ENCODE measurements at regions of chr12 and their contacts with region 1.

Region 1: DNA sequence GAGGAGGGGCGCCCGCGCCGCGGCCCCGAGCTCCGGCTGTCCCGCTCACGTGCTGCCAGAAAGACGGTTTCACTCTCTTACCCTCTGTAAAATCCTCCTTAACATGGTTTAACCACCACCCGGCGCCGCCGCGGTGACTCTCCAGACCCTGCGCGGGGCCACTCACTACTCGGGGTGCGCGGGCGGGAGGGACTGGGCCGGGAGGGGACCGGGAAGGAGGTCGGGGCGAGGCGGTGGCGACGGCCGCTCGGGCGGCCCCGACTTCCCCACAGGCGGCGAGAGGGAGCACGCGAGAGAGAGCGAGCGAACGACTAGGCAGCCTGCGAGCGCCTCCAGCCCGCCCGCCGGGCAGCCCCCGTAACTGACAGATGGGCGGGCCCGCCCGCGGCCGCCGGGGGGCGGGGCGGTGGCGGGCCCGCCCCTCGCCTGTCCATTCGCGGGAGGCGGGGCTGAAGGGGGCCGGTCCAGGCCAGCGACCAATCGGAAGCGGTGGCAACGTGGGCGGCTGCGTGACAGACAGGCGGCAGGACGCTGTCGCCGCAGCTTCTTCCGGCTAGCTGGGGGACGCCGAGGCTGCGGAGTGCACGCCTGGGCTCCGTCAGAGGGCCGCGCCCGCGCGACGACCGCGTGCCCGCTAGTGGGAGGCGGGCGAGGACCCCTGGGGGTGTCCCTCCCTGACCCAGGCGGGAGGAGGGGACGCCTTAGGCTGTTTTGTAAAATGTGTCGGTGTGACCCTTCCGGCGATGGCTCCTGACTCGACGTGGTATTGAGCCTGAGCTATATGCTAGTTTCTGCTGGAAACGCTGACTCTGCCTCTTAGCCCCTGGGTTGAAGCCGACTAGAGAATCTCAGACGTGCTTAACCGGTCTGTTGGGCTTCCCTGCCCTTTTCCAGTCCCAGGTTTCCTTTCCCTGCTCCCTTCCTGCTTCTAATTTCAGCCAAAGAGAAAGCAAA is at the start of gene EEA1:
- DNase-seq: peak; percentile 88 to 97 (median 95)
- ATAC-seq: peak; percentile 84
- H3K4me3 ChIP-seq: peak within 1 kb of the TSS; percentile 71 to 78
- H3K4me3 Mint-ChIP-seq: peak within 1 kb of the TSS; percentile 85
- H3K27ac ChIP-seq: peak within 1 kb of the TSS; percentile 85 to 90
- H3K27ac Mint-ChIP-seq: peak within 1 kb of the TSS; percentile 95
- H3K4me1 ChIP-seq: peaks cover 26% of the 10 kb centered on the region
- H3K4me1 Mint-ChIP-seq: peaks cover 40% of the 10 kb centered on the region
- H3K27me3 ChIP-seq: no peaks in the 10 kb centered on the region
- H3K27me3 Mint-ChIP-seq: no peaks in the 10 kb centered on the region
- CTCF ChIP-seq: no peak
- total RNA-seq, gene EEA1: 4.3 to 6.9 TPM

Region 2: DNA sequence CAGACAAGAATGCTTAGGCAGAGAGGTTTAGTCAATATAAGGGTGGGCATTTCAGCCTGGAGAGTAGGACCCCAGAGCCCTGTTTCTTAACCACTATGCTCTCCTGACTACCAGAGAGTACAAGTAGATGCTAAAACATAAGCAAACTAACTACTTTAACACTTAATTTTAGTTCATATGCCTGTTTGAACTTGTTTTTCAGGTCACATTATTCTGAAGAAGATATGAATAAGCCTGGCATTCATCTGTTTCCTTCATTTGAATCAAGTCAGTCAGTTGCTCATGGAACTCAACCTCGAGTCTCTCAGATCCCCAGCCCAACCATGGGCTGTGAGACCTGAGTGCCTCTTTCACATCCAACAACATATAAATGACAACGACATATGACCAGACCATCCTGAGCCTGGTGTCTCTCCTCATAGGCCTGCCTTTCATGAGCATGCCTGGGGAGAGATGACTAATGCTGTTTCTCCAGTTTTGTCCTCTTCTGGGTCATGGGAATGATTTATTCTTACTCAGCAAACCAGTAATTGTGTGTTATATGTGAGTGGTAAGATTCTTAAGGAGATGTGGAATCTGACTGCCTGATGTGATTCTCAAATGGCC is 532.5 kb before region 1 on chr12:
- CTCF ChIA-PET with region 1: no interaction called
- POLR2A ChIA-PET with region 1: no interaction called
- intact Hi-C with region 1: loop called in 1 of 2 experiments (anchors 10 kb)
- DNase-seq: no peak
- ATAC-seq: no peak
- H3K4me3 ChIP-seq: no peak overlapping the region
- H3K4me3 Mint-ChIP-seq: peak overlapping the region; percentile 4
- H3K27ac ChIP-seq: peak overlapping the region; percentile 2 to 46
- H3K27ac Mint-ChIP-seq: peak overlapping the region; percentile 95
- H3K4me1 ChIP-seq: peaks cover 88% of the 10 kb centered on the region
- H3K4me1 Mint-ChIP-seq: peaks cover 93% of the 10 kb centered on the region
- H3K27me3 ChIP-seq: no peaks in the 10 kb centered on the region
- H3K27me3 Mint-ChIP-seq: no peaks in the 10 kb centered on the region
- CTCF ChIP-seq: no peak

Region 3: DNA sequence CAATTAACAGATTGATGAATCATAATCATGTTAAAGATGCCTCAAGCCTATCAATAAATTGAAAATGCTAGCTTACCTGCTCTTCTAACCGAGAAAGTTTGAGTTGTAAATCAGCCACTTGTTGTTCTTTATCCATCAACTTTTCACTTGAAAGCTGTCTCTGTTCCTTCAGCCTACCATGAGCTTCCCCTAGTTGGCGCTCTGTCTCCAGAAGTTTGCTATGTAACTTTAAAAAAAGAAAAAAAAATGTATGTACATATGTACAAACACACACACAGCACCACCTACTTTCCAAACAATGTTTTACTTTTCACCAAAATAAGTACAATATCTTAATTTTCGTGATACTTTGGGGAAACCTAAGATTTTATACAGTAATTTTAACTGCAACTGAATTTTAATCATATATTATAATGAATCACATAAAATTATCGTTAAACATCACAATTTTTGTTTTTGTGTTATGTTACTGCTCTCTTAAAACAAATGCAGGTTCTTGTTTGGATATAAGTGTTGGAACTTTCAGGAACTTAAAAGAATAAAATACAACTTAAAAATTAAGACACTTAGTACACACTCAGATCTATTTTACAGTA is 101.3 kb before region 1 on chr12:
- CTCF ChIA-PET with region 1: interaction called, 3 read pairs
- POLR2A ChIA-PET with region 1: interaction called, 3 read pairs
- intact Hi-C with region 1: loop called (anchors 1 to 5 kb)
- DNase-seq: peak in 6 of 9 experiments; percentile 9 to 61 (median 36)
- ATAC-seq: no peak
- H3K4me3 ChIP-seq: no peak overlapping the region
- H3K4me3 Mint-ChIP-seq: no peak overlapping the region
- H3K27ac ChIP-seq: no peak overlapping the region
- H3K27ac Mint-ChIP-seq: no peak overlapping the region
- H3K4me1 ChIP-seq: no peaks in the 10 kb centered on the region
- H3K4me1 Mint-ChIP-seq: peaks cover under 1% of the 10 kb centered on the region
- H3K27me3 ChIP-seq: no peaks in the 10 kb centered on the region
- H3K27me3 Mint-ChIP-seq: no peaks in the 10 kb centered on the region
- CTCF ChIP-seq: peak; percentile 64

Region 4: GRCh38 chr12:92890601-92891106 is 38.6 kb before region 1 on chr12:
- CTCF ChIA-PET with region 1: interaction called, 3 read pairs
- POLR2A ChIA-PET with region 1: interaction called, 3 read pairs
- intact Hi-C with region 1: loop called (anchors 5 kb)
- DNase-seq: no peak
- ATAC-seq: no peak
- H3K4me3 ChIP-seq: no peak overlapping the region
- H3K4me3 Mint-ChIP-seq: no peak overlapping the region
- H3K27ac ChIP-seq: no peak overlapping the region
- H3K27ac Mint-ChIP-seq: no peak overlapping the region
- H3K4me1 ChIP-seq: no peaks in the 10 kb centered on the region
- H3K4me1 Mint-ChIP-seq: peaks cover 31% of the 10 kb centered on the region
- H3K27me3 ChIP-seq: no peaks in the 10 kb centered on the region
- H3K27me3 Mint-ChIP-seq: no peaks in the 10 kb centered on the region
- CTCF ChIP-seq: no peak

Region 5: DNA sequence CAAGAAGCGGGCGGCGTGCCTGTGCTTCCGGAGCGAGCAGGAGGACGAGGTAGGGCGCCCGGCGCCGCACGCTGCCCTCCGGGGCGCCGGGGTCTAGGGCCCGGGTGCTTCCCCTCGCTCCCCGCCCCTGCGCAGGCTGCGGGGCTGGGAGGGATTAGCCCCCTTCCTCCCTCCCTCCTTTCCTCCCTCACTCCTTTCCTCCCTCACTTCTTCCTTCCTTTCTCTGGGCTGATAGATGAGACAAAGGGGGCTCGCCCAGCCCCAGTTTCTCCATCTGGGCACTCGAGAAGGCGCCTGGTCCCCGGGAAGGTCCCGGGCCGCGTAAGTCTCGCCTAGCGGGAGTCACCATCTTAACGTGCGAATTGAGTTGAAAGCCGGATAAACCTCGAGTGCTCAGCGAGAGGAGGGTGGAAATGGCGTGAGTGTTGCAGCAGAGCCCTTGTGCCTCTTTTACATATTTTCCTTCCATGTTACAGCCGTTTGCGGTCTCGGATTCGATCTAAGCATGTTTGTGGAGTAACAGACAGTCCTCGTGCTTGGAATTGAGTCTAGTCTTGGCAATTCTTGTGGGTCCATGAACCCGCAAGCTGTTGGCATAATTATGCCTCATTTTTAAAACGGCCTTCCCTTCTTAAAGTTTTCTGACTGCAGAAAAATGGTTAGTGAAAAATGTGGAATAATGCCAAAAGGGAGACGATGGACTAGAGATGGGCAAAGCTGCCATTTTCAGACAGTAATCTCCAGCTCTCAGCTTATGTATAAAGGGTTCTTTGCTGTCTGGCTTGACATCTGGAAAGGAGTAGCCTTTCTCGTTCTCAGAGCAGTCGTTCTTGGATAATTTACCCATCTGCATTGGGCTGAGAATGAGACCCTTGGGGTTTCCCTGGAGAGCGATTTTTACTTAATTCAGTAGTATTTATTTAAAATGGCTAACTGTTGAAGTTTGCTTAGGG is 449.4 kb after region 1 on chr12:
- CTCF ChIA-PET with region 1: interaction called, 3 read pairs
- POLR2A ChIA-PET with region 1: interaction called, 4 read pairs
- intact Hi-C with region 1: loop called (anchors 1 to 5 kb)
- DNase-seq: peak; percentile 18 to 85 (median 57)
- ATAC-seq: peak; percentile 54
- H3K4me3 ChIP-seq: peak overlapping the region; percentile 72 to 87
- H3K4me3 Mint-ChIP-seq: peak overlapping the region; percentile 99
- H3K27ac ChIP-seq: peak overlapping the region; percentile 77 to 81
- H3K27ac Mint-ChIP-seq: peak overlapping the region; percentile 99
- H3K4me1 ChIP-seq: peaks cover 23% of the 10 kb centered on the region
- H3K4me1 Mint-ChIP-seq: peaks cover 44% of the 10 kb centered on the region
- H3K27me3 ChIP-seq: no peaks in the 10 kb centered on the region
- H3K27me3 Mint-ChIP-seq: no peaks in the 10 kb centered on the region
- CTCF ChIP-seq: no peak

Region 6: GRCh38 chr12:93467351-93468007 is 538.2 kb after region 1 on chr12 and contains the start of gene MRPL42:
- CTCF ChIA-PET with region 1: no interaction called
- POLR2A ChIA-PET with region 1: no interaction called
- intact Hi-C with region 1: loop called (anchors 1 to 5 kb)
- DNase-seq: peak; percentile 88 to 96 (median 91)
- ATAC-seq: peak; percentile 94
- H3K4me3 ChIP-seq: peak within 1 kb of the TSS; percentile 64 to 95
- H3K4me3 Mint-ChIP-seq: peak within 1 kb of the TSS; percentile 93
- H3K27ac ChIP-seq: peak within 1 kb of the TSS; percentile 81 to 88
- H3K27ac Mint-ChIP-seq: peak within 1 kb of the TSS; percentile 95
- H3K4me1 ChIP-seq: peaks cover 15% of the 10 kb centered on the region
- H3K4me1 Mint-ChIP-seq: peaks cover 34% of the 10 kb centered on the region
- H3K27me3 ChIP-seq: no peaks in the 10 kb centered on the region
- H3K27me3 Mint-ChIP-seq: no peaks in the 10 kb centered on the region
- CTCF ChIP-seq: peak; percentile 71
- total RNA-seq, gene MRPL42: 31.6 to 33.2 TPM

Measured in CD8-positive, alpha-beta T cell (primary cell).